PC-9 (cell line): ENCODE measurements at regions of chr3 and their contacts with region 1.

Region 1: GRCh38 chr3:37945807-37946530 is 44.6 kb upstream of the VILL start:
- DNase-seq: peak; percentile 95 to 97
- H3K4me3 ChIP-seq: peak overlapping the region; percentile 16; the same call in 1 of the 2 replicates
- H3K27ac ChIP-seq: peak overlapping the region; percentile 88
- H3K4me1 ChIP-seq: peaks cover 59% of the 10 kb centered on the region
- H3K27me3 ChIP-seq: no peaks in the 10 kb centered on the region
- CTCF ChIP-seq: no peak

Region 2: DNA sequence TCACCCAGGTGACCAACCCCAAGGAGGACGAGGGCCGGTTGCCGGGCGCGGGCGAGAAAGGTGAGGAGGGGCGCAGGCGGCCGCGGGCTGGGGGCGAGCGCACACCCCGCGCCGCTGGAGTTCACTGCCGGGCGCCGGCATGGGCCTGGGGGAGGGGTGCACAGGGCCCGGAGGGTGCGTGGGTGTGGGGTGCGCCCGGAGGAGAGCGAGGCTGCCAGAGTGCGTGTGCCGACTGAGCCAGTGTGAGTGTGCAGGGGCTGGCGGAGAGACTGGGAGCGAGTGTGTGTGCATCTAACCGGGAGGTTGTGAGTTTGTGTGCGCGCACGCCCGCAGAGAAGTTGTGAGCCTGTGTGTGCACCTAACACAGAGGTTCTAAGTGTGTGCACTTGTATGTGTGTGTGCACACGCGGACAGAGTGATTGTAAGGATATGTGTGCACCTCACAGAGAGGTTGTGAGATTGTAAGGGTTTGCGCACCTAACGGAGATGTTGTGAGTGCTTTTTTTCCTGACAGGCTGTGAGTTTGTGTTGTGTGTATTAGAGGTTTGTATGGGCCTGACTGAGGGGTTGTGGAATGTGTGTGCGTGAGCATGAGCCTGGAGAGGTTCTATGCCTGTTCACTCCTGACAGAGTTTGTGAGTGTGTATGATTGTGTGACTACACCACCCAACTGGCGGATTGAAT is 83.6 kb before region 1 on chr3:
- CTCF ChIA-PET with region 1: no interaction called
- POLR2A ChIA-PET with region 1: interaction called, 8 read pairs
- intact Hi-C with region 1: loop called (anchors 1 kb)
- DNase-seq: peak in 1 of 2 experiments; percentile 15
- H3K4me3 ChIP-seq: peak overlapping the region; percentile 87
- H3K27ac ChIP-seq: peak overlapping the region; percentile 66
- H3K4me1 ChIP-seq: peaks cover 38% of the 10 kb centered on the region
- H3K27me3 ChIP-seq: no peaks in the 10 kb centered on the region
- CTCF ChIP-seq: no peak

Region 3: DNA sequence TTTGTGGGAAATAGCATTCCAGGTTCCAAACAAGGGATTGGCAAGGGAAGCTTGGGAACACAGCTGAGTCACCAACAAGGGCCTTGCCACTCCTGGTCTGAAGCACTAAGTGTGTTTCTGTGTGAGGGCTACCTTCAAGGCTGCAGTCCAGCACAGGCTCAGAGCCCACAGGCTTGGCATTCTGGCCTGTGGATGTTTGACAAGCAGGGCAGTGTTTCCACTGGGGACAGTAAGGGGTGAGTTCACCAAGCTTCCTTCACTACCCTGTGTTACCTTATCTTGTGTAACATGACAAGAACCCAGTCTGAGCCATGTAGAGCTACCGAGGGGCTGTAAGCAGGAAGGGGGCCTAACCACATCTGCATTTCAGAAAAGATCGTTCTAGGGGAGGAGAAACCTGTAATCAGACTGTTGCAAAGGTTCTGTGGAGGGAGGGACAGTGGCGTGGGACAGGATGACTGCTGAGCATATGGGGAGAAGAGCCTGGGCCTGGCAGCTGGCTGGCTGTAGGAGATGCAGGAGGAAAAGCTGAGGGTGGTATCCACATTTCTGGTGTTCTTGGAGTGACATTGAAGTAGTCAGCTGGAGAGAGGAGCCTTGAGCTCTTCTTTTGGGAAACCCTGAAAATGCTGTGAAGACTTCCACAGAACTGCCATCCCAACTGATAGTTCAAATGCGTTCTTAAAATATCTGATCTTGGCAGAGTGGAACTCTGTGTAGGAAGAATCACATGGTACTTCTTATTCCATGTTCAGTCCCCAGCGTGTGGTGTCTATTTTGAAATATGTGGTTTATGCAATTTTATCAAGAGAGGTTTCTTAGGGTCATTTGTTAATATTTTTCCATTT is 23.0 kb before region 1 on chr3:
- CTCF ChIA-PET with region 1: no interaction called
- POLR2A ChIA-PET with region 1: no interaction called
- intact Hi-C with region 1: no loop called
- DNase-seq: no peak
- H3K4me3 ChIP-seq: no peak overlapping the region
- H3K27ac ChIP-seq: no peak overlapping the region
- H3K4me1 ChIP-seq: no peaks in the 10 kb centered on the region
- H3K27me3 ChIP-seq: no peaks in the 10 kb centered on the region
- CTCF ChIP-seq: no peak

Region 4: GRCh38 chr3:37986479-37987314 is 40.7 kb after region 1 on chr3:
- CTCF ChIA-PET with region 1: no interaction called
- POLR2A ChIA-PET with region 1: interaction called, 3 read pairs
- intact Hi-C with region 1: loop called (anchors 1 kb)
- DNase-seq: peak; percentile 89 to 94
- H3K4me3 ChIP-seq: no peak overlapping the region
- H3K27ac ChIP-seq: peak overlapping the region; percentile 56
- H3K4me1 ChIP-seq: peaks cover 57% of the 10 kb centered on the region
- H3K27me3 ChIP-seq: no peaks in the 10 kb centered on the region
- CTCF ChIP-seq: no peak

Region 5: GRCh38 chr3:37996785-37997301 is 50.9 kb after region 1 on chr3:
- CTCF ChIA-PET with region 1: no interaction called
- POLR2A ChIA-PET with region 1: interaction called, 3 read pairs
- intact Hi-C with region 1: loop called (anchors 1 kb)
- DNase-seq: peak; percentile 70 to 72
- H3K4me3 ChIP-seq: no peak overlapping the region
- H3K27ac ChIP-seq: no peak overlapping the region
- H3K4me1 ChIP-seq: peaks cover 30% of the 10 kb centered on the region
- H3K27me3 ChIP-seq: no peaks in the 10 kb centered on the region
- CTCF ChIP-seq: peak; percentile 92

Region 6: DNA sequence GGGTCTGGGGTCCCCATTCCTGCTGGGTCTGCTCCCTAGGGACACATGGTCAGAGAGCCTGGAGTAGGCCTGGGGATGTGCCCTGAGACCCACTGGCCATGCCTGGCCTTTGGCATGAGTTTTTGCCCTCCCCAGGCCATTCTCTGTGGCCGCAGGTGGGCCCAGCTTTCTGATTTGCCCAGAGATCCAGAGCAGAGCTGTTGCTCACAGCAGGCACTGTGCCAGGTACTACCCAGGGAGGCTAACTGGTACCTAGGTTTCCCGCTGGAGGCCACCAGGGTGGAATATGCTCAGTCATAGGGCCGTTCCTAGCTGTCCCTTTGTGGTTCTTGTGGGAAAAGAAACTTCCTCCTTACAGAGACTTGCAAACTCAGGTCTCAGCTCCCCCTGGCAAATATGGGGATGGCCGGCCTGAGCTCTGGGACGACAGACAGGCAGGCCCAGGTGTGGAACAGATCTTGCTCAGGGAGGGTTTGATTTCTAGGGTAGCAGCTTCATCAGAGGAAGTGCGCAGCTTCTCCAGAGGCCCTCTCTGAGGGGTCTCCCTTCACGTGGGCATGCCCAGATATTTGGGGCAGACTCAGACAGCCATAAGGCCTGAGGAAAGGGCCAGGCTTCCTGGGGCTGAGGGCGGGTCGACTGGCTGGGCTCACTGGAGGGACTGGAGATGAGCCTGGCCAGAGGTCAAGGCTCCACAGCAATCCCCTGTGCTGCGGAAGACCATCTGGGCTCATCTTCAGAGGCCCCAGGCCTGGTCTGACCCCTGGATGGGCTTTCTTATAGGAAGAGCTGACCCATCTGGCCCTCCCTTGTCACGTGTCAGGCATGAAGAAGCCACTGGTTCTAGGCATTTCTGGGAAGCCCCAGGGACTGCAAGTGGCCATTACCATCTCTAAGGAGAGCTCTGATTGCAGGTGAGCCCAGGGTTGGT is 162.9 kb after region 1 on chr3:
- CTCF ChIA-PET with region 1: no interaction called
- POLR2A ChIA-PET with region 1: no interaction called
- intact Hi-C with region 1: no loop called
- DNase-seq: no peak
- H3K4me3 ChIP-seq: no peak overlapping the region
- H3K27ac ChIP-seq: no peak overlapping the region
- H3K4me1 ChIP-seq: no peaks in the 10 kb centered on the region
- H3K27me3 ChIP-seq: no peaks in the 10 kb centered on the region
- CTCF ChIP-seq: no peak

Region 7: DNA sequence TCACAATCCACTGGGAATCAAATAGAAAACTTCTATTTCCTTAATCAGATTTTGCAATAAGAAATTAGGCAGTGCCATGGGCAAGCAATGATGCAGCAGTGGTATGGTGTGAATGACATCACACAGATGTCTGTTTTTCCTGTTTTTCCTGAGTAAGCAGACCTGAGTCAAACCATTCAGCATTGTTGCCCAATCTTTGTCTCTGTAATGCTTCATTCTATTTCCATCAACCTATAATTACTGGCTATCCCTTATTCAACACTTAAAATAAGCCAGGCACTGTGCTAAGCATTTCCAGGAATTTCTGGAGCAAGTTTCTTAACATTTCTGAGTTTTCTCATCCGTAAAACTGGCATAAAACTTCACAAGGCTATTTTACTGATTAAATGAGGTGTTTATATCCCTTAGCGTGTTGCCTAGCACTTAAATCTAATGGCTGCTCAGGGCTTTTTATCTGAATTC is 208.1 kb after region 1 on chr3:
- CTCF ChIA-PET with region 1: no interaction called
- POLR2A ChIA-PET with region 1: interaction called, 9 read pairs
- intact Hi-C with region 1: loop called (anchors 5 kb)
- DNase-seq: peak; percentile 42 to 97
- H3K4me3 ChIP-seq: peak overlapping the region; percentile 3; the same call in 1 of the 2 replicates
- H3K27ac ChIP-seq: peak overlapping the region; percentile 92
- H3K4me1 ChIP-seq: peaks cover 73% of the 10 kb centered on the region
- H3K27me3 ChIP-seq: no peaks in the 10 kb centered on the region
- CTCF ChIP-seq: no peak

Region 8: DNA sequence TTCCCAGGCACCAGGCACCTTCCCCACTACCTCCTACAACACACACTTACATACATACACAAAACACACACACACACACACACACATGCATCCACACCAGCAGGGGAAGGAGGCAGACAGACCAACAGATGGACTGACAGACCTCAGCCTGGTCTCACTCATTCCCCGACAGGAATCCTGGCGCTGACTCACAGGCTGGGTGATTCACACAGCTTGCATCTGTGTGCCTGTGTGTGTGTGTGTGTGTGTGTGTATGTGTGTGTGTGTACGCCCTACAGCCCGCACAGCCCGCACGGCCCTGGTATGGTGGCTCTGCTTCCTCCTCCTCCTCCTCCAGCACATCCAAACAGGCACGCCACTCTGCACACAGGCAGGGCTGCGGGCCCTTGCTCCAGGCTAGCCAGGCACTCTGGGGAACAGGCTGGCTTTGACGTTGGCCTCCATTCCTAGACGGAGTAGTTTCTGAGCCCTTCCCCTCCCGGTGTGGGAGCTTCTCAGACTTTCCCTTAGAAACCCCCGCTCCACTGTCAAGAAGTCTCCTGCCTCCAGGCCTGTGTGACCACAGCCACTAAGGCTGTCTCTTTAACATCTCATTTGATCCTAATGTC is 1201.1 kb after region 1 on chr3:
- CTCF ChIA-PET with region 1: no interaction called
- POLR2A ChIA-PET with region 1: no interaction called
- intact Hi-C with region 1: loop called (anchors 10 kb)
- DNase-seq: peak; percentile 85 to 88
- H3K4me3 ChIP-seq: peak overlapping the region; percentile 40; the same call in 1 of the 2 replicates
- H3K27ac ChIP-seq: peak overlapping the region; percentile 65
- H3K4me1 ChIP-seq: peaks cover 83% of the 10 kb centered on the region
- H3K27me3 ChIP-seq: no peaks in the 10 kb centered on the region
- CTCF ChIP-seq: no peak